ENCODE measurements at regions of chr10 and their contacts with region 1.

Region 1: GRCh38 chr10:17216217-17216900 is 11.7 kb upstream of the VIM start:
- DNase-seq: no peak
- ATAC-seq: peak; percentile 88
- H3K4me3 ChIP-seq: no peak overlapping the region
- H3K27ac ChIP-seq: peak overlapping the region; percentile 99
- H3K4me1 ChIP-seq: peaks cover 62% of the 10 kb centered on the region
- H3K27me3 ChIP-seq: no peaks in the 10 kb centered on the region
- CTCF ChIP-seq: no peak

Region 2: GRCh38 chr10:16996530-16996964 is 219.8 kb before region 1 on chr10:
- CTCF ChIA-PET with region 1: interaction called, 10 read pairs
- POLR2A ChIA-PET with region 1: no interaction called
- in situ Hi-C with region 1: no loop called
- intact Hi-C with region 1: no loop called
- DNase-seq: no peak
- ATAC-seq: peak; percentile 38; the same call in 1 of the 2 replicates
- H3K4me3 ChIP-seq: no peak overlapping the region
- H3K27ac ChIP-seq: peak overlapping the region; percentile 60
- H3K4me1 ChIP-seq: peaks cover 4% of the 10 kb centered on the region
- H3K27me3 ChIP-seq: no peaks in the 10 kb centered on the region
- CTCF ChIP-seq: no peak

Region 3: DNA sequence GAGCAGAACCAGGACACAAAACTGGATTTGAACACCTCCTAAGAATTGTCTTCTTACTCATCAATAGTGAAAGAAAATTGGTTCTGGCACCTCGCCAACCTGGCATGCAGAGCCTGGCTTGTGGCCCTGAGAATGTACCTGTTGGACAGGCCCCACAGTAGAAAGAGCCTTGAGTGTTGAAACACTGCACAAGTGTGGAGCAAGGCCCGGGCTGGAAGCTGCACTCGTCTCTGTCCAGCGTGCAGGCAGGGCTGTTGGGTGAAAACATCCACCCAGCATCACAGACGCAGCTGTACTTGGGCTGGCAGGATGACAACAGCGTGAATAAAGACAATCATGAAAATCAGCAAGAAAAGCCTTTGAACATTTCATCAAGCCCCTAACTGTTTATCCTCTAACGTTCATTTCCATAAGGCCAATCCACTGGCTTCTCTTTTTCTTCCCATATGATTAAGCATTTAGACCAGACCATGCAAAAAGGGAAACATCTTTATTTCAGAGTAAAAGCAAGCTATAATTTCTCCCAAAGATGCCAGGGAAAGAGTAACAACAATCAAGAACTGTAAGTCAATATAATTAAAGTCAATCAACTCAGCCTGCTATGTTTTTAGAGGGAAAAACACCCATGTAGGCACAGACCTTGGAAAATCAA is 102.3 kb before region 1 on chr10:
- CTCF ChIA-PET with region 1: no interaction called
- POLR2A ChIA-PET with region 1: interaction called, 10 read pairs
- in situ Hi-C with region 1: no loop called
- intact Hi-C with region 1: no loop called
- DNase-seq: no peak
- ATAC-seq: peak; percentile 53
- H3K4me3 ChIP-seq: no peak overlapping the region
- H3K27ac ChIP-seq: peak overlapping the region; percentile 99
- H3K4me1 ChIP-seq: peaks cover 39% of the 10 kb centered on the region
- H3K27me3 ChIP-seq: no peaks in the 10 kb centered on the region
- CTCF ChIP-seq: no peak

Region 4: GRCh38 chr10:17801507-17801906 is 585.1 kb after region 1 on chr10:
- CTCF ChIA-PET with region 1: no interaction called
- POLR2A ChIA-PET with region 1: interaction called, 17 read pairs
- in situ Hi-C with region 1: no loop called
- intact Hi-C with region 1: no loop called
- DNase-seq: no peak
- ATAC-seq: no peak
- H3K4me3 ChIP-seq: no peak overlapping the region
- H3K27ac ChIP-seq: no peak overlapping the region
- H3K4me1 ChIP-seq: no peaks in the 10 kb centered on the region
- H3K27me3 ChIP-seq: no peaks in the 10 kb centered on the region
- CTCF ChIP-seq: no peak; the same call in 1 of the 2 replicates